PC-9 (cell line): ENCODE measurements at regions of chr7 and their contacts with region 1.

Region 1: DNA sequence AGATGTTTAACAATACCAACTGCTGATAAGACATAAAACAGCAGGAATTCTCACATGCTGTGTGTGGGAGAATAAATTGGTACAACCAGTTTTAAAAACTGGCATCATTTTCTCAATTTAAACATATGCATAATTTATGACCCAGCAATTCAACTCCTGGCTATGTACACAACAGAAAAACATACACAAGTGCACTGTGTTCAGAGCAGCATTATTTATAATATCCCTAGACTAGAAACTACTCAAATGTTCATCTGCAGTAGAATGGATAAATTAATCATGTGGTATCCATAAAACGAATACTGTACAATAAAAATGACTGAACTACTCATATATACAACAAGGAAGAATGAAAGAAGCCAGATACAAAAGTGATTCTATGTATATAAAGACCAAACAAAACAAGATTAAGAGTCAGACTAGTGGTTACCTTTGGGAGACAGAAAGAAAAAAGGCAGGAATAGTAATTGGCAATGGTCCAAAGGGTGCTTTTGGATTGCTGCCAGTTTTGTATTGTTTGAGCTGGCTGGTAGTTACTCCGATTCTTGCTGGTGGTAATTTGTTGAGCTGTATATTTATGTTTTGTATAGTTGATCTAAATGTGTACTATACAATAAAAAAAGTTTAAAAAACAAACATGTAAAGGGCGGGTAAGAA is 306.0 kb downstream of the TFEC start:
- DNase-seq: peak in 1 of 2 experiments; percentile 10
- H3K4me3 ChIP-seq: no peak overlapping the region
- H3K27ac ChIP-seq: no peak overlapping the region
- H3K4me1 ChIP-seq: no peaks in the 10 kb centered on the region
- H3K27me3 ChIP-seq: no peaks in the 10 kb centered on the region
- CTCF ChIP-seq: no peak

Region 2: GRCh38 chr7:115572111-115572510 is 152.4 kb before region 1 on chr7:
- CTCF ChIA-PET with region 1: interaction called, 16 read pairs
- POLR2A ChIA-PET with region 1: no interaction called
- intact Hi-C with region 1: no loop called
- DNase-seq: no peak
- H3K4me3 ChIP-seq: no peak overlapping the region
- H3K27ac ChIP-seq: no peak overlapping the region
- H3K4me1 ChIP-seq: no peaks in the 10 kb centered on the region
- H3K27me3 ChIP-seq: no peaks in the 10 kb centered on the region
- CTCF ChIP-seq: no peak

Region 3: DNA sequence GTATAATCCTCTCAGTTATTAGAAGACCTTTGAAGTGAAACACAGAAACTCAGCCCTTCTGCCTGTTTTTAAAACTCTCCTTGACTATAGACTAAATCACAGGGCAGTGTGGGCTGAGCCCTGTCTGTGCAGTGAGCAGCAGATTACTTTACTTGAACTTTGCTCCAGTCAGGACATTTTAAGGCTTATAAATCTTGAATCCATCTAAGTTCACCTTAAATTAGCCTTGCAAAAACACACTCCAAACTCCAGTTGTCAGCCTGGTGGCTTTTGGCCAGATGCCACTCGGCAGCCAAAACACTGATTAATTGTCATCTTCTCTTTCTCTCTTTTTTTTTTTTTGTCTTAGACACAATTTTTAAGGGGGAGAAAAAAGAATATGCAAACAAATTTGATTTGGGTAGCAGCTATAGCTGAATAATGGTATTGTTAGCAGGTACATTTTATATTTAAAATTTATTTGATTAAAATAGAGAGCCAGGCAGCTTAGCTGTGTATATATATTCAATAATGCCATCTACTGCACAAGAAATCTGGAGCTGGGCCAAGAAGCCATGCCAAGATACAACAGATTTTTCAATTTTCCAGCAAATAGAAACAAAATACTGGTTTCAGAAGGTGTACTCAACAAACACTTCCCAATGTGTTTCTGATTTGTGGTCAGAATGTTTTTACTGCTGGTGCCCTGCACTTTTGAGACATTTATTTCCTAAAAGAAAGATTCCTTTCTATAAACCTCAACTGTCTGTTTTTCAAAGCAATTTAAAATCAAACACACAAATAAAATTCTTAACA is 58.4 kb after region 1 on chr7:
- CTCF ChIA-PET with region 1: no interaction called
- POLR2A ChIA-PET with region 1: no interaction called
- intact Hi-C with region 1: no loop called
- DNase-seq: no peak
- H3K4me3 ChIP-seq: no peak overlapping the region
- H3K27ac ChIP-seq: no peak overlapping the region
- H3K4me1 ChIP-seq: peaks cover 4% of the 10 kb centered on the region; the same call in 1 of the 2 replicates
- H3K27me3 ChIP-seq: no peaks in the 10 kb centered on the region
- CTCF ChIP-seq: no peak